Endothelial cell of umbilical vein (primary cell): ENCODE measurements at regions of chr3 and their contacts with region 1.

Region 1: DNA sequence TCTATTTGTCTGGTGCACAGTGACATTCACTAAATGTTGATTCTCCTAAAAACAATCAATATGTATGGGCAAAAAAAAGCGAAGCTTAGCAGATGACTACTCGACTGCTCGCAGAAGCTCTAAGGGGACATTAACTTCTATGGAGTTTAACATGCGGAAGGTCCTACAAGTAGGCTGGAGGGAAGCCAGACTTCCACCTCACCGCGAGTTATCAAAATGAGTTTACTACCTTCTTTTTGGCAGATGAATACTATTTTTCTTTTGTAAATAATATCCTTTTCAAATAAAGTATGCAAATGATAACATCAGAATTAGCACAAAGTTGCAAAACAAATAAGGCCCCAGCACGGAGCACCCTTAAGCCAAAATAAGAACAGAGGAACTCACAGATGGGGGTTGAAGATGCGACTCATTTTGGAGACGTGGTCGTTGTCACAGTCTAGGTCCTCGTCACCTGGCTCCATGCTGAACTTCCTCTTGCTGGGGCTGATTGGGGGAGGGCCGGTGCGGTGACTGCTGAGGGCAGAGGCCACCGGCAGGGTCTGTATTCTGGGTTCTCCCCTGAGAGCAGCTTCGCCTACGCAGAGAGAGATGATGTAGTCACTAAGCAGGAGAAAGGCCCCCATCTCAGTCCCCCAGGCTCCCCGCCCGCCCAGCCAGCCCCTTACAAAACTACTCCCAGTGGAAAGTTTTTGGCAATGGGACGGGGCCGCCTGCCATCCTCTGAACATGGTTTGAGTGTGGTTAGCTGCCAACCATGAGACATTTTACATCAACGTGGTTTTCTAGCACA is 42.1 kb downstream of the VGLL4 start:
- DNase-seq: no peak
- H3K4me3 ChIP-seq: no peak overlapping the region
- H3K27ac ChIP-seq: peak overlapping the region; percentile 64
- H3K4me1 ChIP-seq: peaks cover 23% of the 10 kb centered on the region
- H3K27me3 ChIP-seq: no peaks in the 10 kb centered on the region
- CTCF ChIP-seq: no peak
- POLR2A ChIP-seq: no peak

Region 2: DNA sequence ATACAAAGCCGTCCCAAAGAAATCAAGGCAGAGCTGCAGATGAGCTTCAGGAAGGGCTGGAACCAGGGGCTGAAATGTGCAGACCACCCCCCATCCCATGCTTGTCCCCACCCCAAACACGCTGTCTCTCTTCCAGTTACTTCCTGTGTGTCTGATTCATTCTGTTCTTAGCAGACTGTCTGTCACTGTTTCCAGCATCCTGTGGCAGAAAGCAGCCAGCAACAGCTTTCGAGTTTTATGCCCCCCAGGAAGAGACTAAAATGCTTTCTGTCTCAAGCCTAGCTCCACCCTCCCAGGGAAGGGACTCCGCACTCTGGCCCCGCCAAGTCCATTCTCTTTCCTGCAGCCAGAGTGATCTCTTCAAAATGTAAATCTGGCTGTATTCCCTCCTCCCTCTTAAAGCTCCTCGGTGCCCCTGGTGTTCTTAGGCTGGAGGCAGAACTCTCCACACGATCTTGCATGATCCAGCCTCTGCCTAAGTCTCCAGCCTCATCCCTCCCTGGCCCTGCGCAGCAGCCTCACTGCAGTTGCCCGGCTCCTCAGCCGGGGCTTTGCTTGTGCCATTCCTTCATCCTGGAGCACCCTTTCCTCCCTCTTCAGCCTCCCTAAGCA is 405.8 kb before region 1 on chr3:
- CTCF ChIA-PET with region 1: no interaction called
- POLR2A ChIA-PET with region 1: no interaction called
- dilution Hi-C with region 1: no loop called
- intact Hi-C with region 1: no loop called
- DNase-seq: peak; percentile 65
- H3K4me3 ChIP-seq: no peak overlapping the region
- H3K27ac ChIP-seq: peak overlapping the region; percentile 67
- H3K4me1 ChIP-seq: peaks cover 61% of the 10 kb centered on the region
- H3K27me3 ChIP-seq: no peaks in the 10 kb centered on the region
- CTCF ChIP-seq: no peak
- POLR2A ChIP-seq: peak; percentile 65

Region 3: GRCh38 chr3:11507719-11508118 is 93.9 kb before region 1 on chr3:
- CTCF ChIA-PET with region 1: no interaction called
- POLR2A ChIA-PET with region 1: no interaction called
- dilution Hi-C with region 1: no loop called
- intact Hi-C with region 1: no loop called
- DNase-seq: no peak
- H3K4me3 ChIP-seq: no peak overlapping the region
- H3K27ac ChIP-seq: no peak overlapping the region
- H3K4me1 ChIP-seq: peaks cover 31% of the 10 kb centered on the region
- H3K27me3 ChIP-seq: no peaks in the 10 kb centered on the region
- CTCF ChIP-seq: no peak
- POLR2A ChIP-seq: no peak

Region 4: GRCh38 chr3:11558002-11558401 is 43.6 kb before region 1 on chr3:
- CTCF ChIA-PET with region 1: interaction called, 4 read pairs
- POLR2A ChIA-PET with region 1: no interaction called
- dilution Hi-C with region 1: no loop called
- intact Hi-C with region 1: loop called (anchors 2 kb)
- DNase-seq: peak; percentile 76
- H3K4me3 ChIP-seq: no peak overlapping the region
- H3K27ac ChIP-seq: peak overlapping the region; percentile 78
- H3K4me1 ChIP-seq: peaks cover 51% of the 10 kb centered on the region
- H3K27me3 ChIP-seq: no peaks in the 10 kb centered on the region
- CTCF ChIP-seq: no peak
- POLR2A ChIP-seq: no peak

Region 5: GRCh38 chr3:11591391-11592282 is 10.0 kb before region 1 on chr3:
- CTCF ChIA-PET with region 1: interaction called, 3 read pairs
- POLR2A ChIA-PET with region 1: interaction called, 3 read pairs
- dilution Hi-C with region 1: no loop called
- intact Hi-C with region 1: loop called (anchors 1 kb)
- DNase-seq: peak; percentile 70
- H3K4me3 ChIP-seq: no peak overlapping the region
- H3K27ac ChIP-seq: peak overlapping the region; percentile 41
- H3K4me1 ChIP-seq: peaks cover 41% of the 10 kb centered on the region
- H3K27me3 ChIP-seq: no peaks in the 10 kb centered on the region
- CTCF ChIP-seq: no peak
- POLR2A ChIP-seq: no peak